ENCODE measurements at regions of chr14 and their contacts with region 1.

Region 1: DNA sequence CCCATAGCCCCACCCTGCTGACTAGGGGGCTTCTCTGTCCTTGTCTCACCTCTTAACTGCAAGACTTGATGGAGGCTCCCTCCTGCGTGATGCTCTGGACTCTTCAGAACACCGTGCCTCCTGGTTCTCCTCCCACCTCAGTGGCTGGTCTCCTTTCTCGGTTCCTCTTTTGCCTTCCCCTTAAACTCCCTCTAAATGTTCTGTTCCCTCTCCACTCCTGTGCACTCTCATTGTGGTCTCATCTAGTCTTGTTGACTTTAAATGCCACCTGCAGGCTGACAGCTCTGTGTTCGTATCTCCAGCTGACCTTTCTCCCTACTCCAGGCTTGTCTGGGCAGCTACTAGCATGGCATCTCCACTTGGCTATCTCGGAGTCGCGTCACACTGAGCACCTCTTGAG is 28.3 kb downstream of the DYNC1H1 start:
- DNase-seq: peak; percentile 84
- ATAC-seq: peak; percentile 97
- H3K4me3 ChIP-seq: peak overlapping the region; percentile 37; the same call in 1 of the 2 replicates
- H3K27ac ChIP-seq: peak overlapping the region; percentile 29; the same call in 1 of the 2 replicates
- H3K4me1 ChIP-seq: peaks cover 29% of the 10 kb centered on the region
- H3K27me3 ChIP-seq: no peaks in the 10 kb centered on the region
- CTCF ChIP-seq: peak; percentile 24 to 61 (median 38); a peak in 4 of 6 replicates
- EP300 ChIP-seq: peak; percentile 43 to 86; a peak in 3 of 4 replicates
- POLR2A ChIP-seq: peak; percentile 44; the same call in 1 of the 2 replicates
- RAD21 ChIP-seq: peak; percentile 63

Region 2: GRCh38 chr14:101707068-101707842 is 285.5 kb before region 1 on chr14:
- CTCF ChIA-PET with region 1: interaction called, 9 read pairs
- POLR2A ChIA-PET with region 1: no interaction called
- RAD21 ChIA-PET with region 1: interaction called, 3 read pairs
- SMC1A ChIA-PET with region 1: no interaction called
- in situ Hi-C with region 1: no loop called
- intact Hi-C with region 1: loop called (anchors 5 kb)
- DNase-seq: peak; percentile 53
- ATAC-seq: peak; percentile 78
- H3K4me3 ChIP-seq: no peak overlapping the region
- H3K27ac ChIP-seq: no peak overlapping the region
- H3K4me1 ChIP-seq: peaks cover 14% of the 10 kb centered on the region
- H3K27me3 ChIP-seq: no peaks in the 10 kb centered on the region; a peak in 2 of 4 replicates
- CTCF ChIP-seq: peak; percentile 65 to 87 (median 80)
- EP300 ChIP-seq: no peak
- POLR2A ChIP-seq: no peak
- RAD21 ChIP-seq: peak; percentile 92

Region 3: DNA sequence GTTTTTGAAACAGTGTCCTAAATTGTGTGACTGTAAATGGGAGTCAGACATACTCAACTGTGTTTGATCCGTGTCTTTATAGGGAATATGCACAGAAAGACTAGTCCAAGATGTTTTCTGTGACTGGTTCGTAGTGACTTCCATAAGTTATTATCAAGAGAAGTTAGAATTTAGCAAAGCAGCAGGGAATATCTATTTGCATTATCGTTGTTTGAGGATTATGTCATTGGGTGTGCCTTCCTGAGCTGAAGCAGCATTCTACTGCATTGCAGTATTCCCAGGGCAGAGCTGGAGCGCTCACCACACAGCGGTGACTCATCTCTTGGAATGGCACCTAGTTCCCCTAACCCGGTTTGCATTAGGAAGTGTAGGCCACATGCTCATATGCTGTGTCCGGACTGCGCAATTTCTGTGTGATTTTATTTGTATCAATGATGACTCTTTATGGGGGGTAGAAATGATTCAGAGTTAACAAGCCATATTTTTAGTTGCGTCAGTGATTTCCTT is 20.4 kb before region 1 on chr14:
- CTCF ChIA-PET with region 1: interaction called, 35 read pairs
- POLR2A ChIA-PET with region 1: interaction called, 4 read pairs
- RAD21 ChIA-PET with region 1: interaction called, 33 read pairs
- SMC1A ChIA-PET with region 1: interaction called, 67 read pairs
- in situ Hi-C with region 1: no loop called
- intact Hi-C with region 1: no loop called
- DNase-seq: no peak
- ATAC-seq: no peak
- H3K4me3 ChIP-seq: no peak overlapping the region
- H3K27ac ChIP-seq: no peak overlapping the region
- H3K4me1 ChIP-seq: peaks cover 4% of the 10 kb centered on the region
- H3K27me3 ChIP-seq: no peaks in the 10 kb centered on the region
- CTCF ChIP-seq: no peak
- EP300 ChIP-seq: no peak
- POLR2A ChIP-seq: no peak
- RAD21 ChIP-seq: no peak

Region 4: GRCh38 chr14:101980251-101981099 is 12.2 kb before region 1 on chr14:
- CTCF ChIA-PET with region 1: interaction called, 3 read pairs
- POLR2A ChIA-PET with region 1: interaction called, 3 read pairs
- RAD21 ChIA-PET with region 1: interaction called, 5 read pairs
- SMC1A ChIA-PET with region 1: interaction called, 12 read pairs
- in situ Hi-C with region 1: no loop called
- intact Hi-C with region 1: no loop called
- DNase-seq: peak; percentile 77
- ATAC-seq: peak; percentile 99
- H3K4me3 ChIP-seq: no peak overlapping the region
- H3K27ac ChIP-seq: no peak overlapping the region
- H3K4me1 ChIP-seq: peaks cover 9% of the 10 kb centered on the region
- H3K27me3 ChIP-seq: no peaks in the 10 kb centered on the region
- CTCF ChIP-seq: no peak
- EP300 ChIP-seq: peak in 1 of 2 experiments; percentile 81; a peak in 2 of 4 replicates
- POLR2A ChIP-seq: no peak
- RAD21 ChIP-seq: no peak